Right ventricle myocardium inferior (tissue), 1 donor: ENCODE measurements at regions of chr9 and their contacts with region 1.

Region 1: DNA sequence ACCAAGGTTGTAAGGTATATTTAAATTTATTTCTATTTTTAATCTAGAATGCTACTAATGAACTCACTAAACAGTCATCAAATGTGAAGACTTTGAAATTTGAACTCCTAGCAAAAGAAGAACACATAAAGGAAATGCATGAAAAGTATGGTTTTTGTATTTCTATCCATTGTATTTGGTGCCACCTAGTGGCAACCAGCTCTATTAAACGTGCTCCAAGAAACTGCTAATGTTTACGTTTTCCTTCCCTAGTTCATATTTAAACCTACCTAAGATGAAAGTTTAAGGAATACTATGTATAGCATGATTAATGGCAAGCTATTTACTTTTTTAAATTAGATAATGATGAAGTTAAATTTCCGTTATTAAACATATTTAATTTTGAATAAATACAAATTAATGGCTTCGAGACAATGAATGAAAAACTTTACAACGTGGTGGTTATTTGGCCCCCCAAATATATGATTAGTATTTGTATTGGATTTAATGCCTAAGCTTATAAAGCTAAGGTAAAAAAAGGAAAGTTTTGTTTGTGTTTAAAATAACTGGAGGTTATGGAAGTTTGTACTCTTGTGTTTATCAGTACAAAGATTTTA is 115.9 kb upstream of the SH3GL2 start:
- DNase-seq: no peak
- ATAC-seq: no peak

Region 2: DNA sequence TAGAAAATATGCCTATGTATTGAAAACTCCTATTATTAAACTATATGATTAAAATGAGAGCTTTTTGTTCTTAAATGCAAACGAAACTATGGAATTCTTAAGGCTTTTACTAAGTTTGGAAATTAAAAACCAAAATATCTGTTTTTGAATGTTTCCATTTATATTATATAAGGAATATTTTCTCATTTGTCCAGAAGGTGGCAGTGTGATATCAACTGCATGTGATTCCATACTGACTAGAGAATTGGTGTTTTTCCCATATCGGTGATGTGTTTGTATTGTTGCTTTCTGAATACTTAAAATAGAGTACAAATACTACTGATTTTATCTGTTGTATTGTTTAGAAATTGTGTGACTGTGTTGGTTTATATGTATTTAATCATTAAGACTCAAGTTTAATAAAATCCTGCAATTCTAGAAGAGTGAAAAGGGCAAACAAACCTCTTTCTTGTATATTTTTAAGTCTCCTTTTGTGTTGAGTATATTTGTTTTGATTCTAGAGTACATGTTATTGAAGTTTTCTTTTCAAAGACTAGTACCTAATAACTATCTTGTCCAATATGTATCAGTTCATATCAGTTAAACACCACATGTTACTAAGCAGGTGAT is 1589.3 kb before region 1 on chr9:
- intact Hi-C with region 1: loop called (anchors 10 kb)
- DNase-seq: no peak
- ATAC-seq: no peak

Region 3: DNA sequence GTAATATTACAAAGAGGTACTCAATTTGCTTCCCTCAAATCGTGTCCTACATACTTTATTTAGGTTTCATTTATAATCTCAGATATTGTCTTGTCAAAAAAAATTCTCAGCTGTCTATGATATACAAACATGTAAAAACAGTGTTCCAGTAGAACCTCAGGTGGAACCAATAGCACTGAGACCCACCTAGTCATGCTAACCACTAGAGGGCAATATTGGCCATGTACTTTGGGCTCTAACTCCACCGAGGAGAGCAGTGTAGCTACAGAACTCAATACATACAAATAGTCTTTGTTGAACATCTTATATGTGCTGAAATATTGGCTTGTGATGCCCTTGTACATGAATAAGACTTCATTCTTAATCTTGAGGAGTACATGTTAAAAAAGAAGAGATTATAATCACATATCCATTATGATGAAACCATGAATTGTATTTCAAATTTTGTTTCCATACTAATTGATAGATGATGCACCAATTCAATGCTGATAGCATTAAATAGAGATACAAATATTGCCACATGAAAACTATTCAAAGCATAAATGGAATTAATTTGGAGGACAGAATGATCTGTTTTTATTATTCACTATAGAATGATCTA is 399.3 kb before region 1 on chr9:
- intact Hi-C with region 1: loop called (anchors 5 kb)
- DNase-seq: no peak
- ATAC-seq: peak; percentile 56

Region 4: GRCh38 chr9:17116400-17116837 is 346.5 kb before region 1 on chr9:
- intact Hi-C with region 1: loop called (anchors 2 kb)
- DNase-seq: no peak
- ATAC-seq: no peak

Region 5: GRCh38 chr9:17422994-17423680 is 39.8 kb before region 1 on chr9:
- intact Hi-C with region 1: no loop called
- DNase-seq: no peak
- ATAC-seq: no peak